GM18951 (cell line): ENCODE measurements at regions of chr1 and their contacts with region 1.

Region 1: DNA sequence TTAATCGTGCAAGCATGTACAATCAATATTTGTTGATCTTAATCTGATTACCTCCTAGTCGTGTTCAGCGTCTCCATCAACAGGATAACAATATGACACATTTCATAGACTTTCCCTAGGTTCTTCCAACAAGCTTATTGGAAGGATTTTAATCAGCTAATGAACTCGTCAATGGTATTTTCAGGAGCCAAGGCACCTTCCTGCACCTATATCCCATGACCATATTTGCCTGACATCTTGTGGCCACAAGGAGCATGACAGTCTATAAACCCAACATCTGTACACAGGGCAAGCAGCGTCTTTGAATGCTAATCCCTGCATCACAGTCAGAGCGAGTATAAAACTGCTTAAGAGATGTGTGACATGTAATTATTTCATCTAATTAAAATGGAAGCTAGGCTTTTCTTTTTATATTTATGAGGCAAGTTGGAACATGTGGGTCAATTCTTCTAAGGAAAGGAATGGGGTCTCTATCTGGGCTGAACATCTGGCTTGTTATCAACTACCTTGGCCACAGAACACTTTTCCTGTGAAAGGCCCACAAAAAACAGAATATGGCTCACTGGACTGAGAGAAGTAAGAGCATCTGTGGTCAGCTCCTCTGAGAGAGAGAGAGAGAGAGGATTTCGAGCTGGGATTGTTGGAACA is 388.8 kb downstream of the NTNG1 start:
- POLR2A ChIP-seq: no peak

Region 2: DNA sequence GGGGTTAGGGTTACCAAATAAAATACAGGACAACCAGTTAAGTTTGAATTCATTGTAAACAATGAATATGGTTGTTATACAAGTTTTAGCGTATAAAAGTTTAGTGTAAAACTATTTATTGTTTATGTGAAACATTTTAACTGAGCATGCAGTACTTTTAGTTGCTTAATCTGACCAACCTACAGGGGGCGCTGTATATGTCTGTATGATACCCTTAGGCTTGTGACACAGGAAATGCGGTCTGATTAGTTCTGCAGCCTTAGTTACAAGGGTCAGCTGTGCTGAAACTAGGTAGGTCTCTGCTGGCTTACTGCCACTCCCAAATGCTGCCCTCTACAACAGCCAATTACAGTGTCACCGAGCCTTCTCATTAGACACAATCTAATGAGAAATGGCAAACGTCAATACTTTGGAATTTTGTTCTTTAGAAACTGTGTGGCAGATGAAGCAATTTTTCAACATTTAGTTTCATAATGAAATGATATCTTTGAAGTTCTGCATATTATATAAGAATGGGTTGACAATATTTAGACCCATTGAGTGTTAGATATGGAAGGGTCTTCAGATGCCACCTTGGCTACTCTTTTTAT is 332.6 kb before region 1 on chr1:
- in situ Hi-C with region 1: loop called (anchors 25 kb)
- POLR2A ChIP-seq: no peak